ENCODE measurements at regions of chr15 and their contacts with region 1.

Region 1: DNA sequence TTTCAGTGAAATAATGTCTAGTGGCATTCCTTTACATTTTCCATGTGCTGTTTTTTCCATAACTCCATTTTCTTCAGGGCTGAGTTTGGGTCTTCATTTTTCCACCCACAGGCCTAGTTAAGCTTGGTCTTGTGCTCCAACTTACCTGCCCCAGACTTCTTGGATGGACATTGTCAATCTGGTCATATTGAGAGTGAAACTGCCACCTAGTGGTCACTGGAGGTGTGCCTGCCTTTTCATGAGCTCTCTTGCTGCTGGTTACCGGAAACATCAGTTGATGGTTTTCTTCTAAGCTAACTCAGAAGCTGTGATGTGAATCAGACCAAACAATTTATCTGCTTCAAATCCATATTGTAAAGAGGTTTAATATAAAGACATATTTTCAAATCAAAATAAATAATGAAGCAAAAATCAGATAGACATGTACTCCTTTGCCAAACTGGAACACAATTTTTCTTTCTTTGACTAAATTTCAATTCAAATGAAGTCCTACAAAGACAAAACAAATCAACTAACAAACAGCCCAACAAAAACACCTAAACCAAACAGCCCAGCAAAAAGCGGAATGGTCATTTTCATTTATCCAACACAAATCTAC is 135.1 kb upstream of the RASGRP1 start:
- DNase-seq: peak; percentile 84
- H3K4me3 Mint-ChIP-seq: peak overlapping the region; percentile 50
- H3K27ac Mint-ChIP-seq: peak overlapping the region; percentile 83
- H3K4me1 Mint-ChIP-seq: peaks cover 55% of the 10 kb centered on the region
- H3K27me3 Mint-ChIP-seq: no peaks in the 10 kb centered on the region

Region 2: DNA sequence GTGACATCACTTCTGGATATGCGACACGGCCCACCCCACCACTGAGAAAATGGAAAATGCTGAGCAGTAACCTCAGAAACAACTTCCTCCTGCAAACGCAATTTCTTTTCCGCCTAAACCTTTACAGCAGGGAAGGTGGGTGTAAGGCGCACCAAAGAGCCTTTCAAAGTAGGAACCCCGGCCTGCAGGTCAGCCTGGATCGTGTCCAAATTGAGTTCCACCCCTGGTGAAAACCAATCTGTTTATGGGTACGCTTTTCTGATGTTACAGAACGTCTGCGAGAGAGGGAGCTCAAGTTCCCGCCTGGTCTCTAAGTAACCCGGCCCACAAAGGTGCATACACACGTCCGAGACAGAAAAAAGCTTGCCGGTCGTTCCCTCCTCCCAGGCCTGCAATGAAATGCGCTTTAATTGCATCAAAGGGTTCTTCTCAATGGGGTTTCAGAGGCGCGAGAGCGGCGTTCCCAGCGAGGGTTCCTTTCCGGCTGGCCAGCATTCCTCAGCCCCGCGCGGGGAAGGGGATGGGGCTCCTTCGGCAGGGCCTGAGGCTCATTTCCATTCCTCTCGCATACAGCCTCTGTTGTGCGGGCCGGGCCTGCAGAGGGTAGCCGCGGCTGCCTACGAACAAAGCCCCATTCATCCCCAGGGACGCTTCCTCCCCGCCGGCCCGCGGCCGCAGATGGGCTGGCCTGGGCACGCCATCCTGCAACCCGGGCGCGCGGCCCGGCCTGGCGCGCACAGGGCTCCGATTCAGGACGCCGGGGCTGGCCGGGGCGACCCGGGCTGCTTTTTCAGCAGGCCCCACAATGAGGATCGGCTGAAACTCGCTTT is 627.2 kb before region 1 on chr15:
- CTCF ChIA-PET with region 1: no interaction called
- POLR2A ChIA-PET with region 1: no interaction called
- intact Hi-C with region 1: loop called (anchors 10 kb)
- DNase-seq: peak; percentile 48
- H3K4me3 Mint-ChIP-seq: peak overlapping the region; percentile 50
- H3K27ac Mint-ChIP-seq: no peak overlapping the region
- H3K4me1 Mint-ChIP-seq: peaks cover 27% of the 10 kb centered on the region
- H3K27me3 Mint-ChIP-seq: peaks cover 59% of the 10 kb centered on the region

Region 3: GRCh38 chr15:38461066-38461833 is 238.5 kb before region 1 on chr15:
- CTCF ChIA-PET with region 1: interaction called, 21 read pairs
- POLR2A ChIA-PET with region 1: no interaction called
- intact Hi-C with region 1: no loop called
- DNase-seq: no peak
- H3K4me3 Mint-ChIP-seq: no peak overlapping the region
- H3K27ac Mint-ChIP-seq: no peak overlapping the region
- H3K4me1 Mint-ChIP-seq: peaks cover 36% of the 10 kb centered on the region
- H3K27me3 Mint-ChIP-seq: no peaks in the 10 kb centered on the region

Region 4: GRCh38 chr15:38508647-38509046 is 191.1 kb before region 1 on chr15:
- CTCF ChIA-PET with region 1: interaction called, 14 read pairs
- POLR2A ChIA-PET with region 1: no interaction called
- intact Hi-C with region 1: no loop called
- DNase-seq: peak; percentile 55
- H3K4me3 Mint-ChIP-seq: no peak overlapping the region
- H3K27ac Mint-ChIP-seq: peak overlapping the region; percentile 88
- H3K4me1 Mint-ChIP-seq: peaks cover 38% of the 10 kb centered on the region
- H3K27me3 Mint-ChIP-seq: no peaks in the 10 kb centered on the region

Region 5: GRCh38 chr15:38683382-38684242 is 16.1 kb before region 1 on chr15:
- CTCF ChIA-PET with region 1: interaction called, 190 read pairs
- POLR2A ChIA-PET with region 1: interaction called, 38 read pairs
- intact Hi-C with region 1: loop called (anchors 1 kb)
- DNase-seq: peak; percentile 84
- H3K4me3 Mint-ChIP-seq: peak overlapping the region; percentile 5
- H3K27ac Mint-ChIP-seq: peak overlapping the region; percentile 92
- H3K4me1 Mint-ChIP-seq: peaks cover 71% of the 10 kb centered on the region
- H3K27me3 Mint-ChIP-seq: no peaks in the 10 kb centered on the region

Region 6: GRCh38 chr15:39426552-39427532 is 727.1 kb after region 1 on chr15:
- CTCF ChIA-PET with region 1: no interaction called
- POLR2A ChIA-PET with region 1: no interaction called
- intact Hi-C with region 1: loop called (anchors 5 kb)
- DNase-seq: peak; percentile 90
- H3K4me3 Mint-ChIP-seq: peak overlapping the region; percentile 13
- H3K27ac Mint-ChIP-seq: peak overlapping the region; percentile 34
- H3K4me1 Mint-ChIP-seq: peaks cover 27% of the 10 kb centered on the region
- H3K27me3 Mint-ChIP-seq: peaks cover 30% of the 10 kb centered on the region